ENCODE measurements at regions of chr2 and their contacts with region 1.

Region 1: GRCh38 chr2:110812726-110813645 is 80.6 kb downstream of the ACOXL start:
- DNase-seq: no peak
- ATAC-seq: no peak
- H3K4me3 ChIP-seq: no peak overlapping the region
- H3K4me3 Mint-ChIP-seq: no peak overlapping the region
- H3K27ac ChIP-seq: no peak overlapping the region
- H3K27ac Mint-ChIP-seq: no peak overlapping the region
- H3K4me1 ChIP-seq: no peaks in the 10 kb centered on the region
- H3K4me1 Mint-ChIP-seq: peaks cover 3% of the 10 kb centered on the region
- H3K27me3 ChIP-seq: peaks cover 0 to 14% (median 3%) of the 10 kb centered on the region in 4 experiments
- H3K27me3 Mint-ChIP-seq: peaks cover 27% of the 10 kb centered on the region
- CTCF ChIP-seq: no peak

Region 2: DNA sequence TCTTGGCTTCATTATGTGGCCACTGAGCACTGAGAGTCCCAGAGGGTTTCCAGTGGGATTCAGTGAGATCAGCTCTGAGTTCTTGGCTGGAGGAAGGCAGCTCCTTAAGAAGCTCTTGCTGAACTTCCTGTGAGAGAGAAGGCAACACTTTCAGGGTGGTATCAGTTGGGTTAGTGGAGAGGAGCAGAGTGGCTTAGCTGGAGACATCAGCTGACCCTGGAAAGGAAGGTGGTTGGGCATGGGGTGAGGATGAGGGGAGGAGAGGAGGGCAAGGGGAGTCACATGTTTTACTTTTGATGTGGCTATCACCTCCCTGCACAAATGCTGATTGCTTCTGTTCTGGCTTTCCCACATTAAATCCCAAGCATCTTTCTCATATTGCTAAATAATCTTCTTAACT is 14.5 kb after region 1 on chr2:
- CTCF ChIA-PET with region 1: interaction called, 15 read pairs
- POLR2A ChIA-PET with region 1: no interaction called
- intact Hi-C with region 1: no loop called
- DNase-seq: no peak
- ATAC-seq: no peak
- H3K4me3 ChIP-seq: no peak overlapping the region
- H3K4me3 Mint-ChIP-seq: no peak overlapping the region
- H3K27ac ChIP-seq: no peak overlapping the region
- H3K27ac Mint-ChIP-seq: no peak overlapping the region
- H3K4me1 ChIP-seq: no peaks in the 10 kb centered on the region
- H3K4me1 Mint-ChIP-seq: no peaks in the 10 kb centered on the region
- H3K27me3 ChIP-seq: peaks cover 0 to 6% (median 1%) of the 10 kb centered on the region in 4 experiments
- H3K27me3 Mint-ChIP-seq: peaks cover 32% of the 10 kb centered on the region
- CTCF ChIP-seq: no peak

Region 3: GRCh38 chr2:110853507-110853906 is 40.5 kb after region 1 on chr2:
- CTCF ChIA-PET with region 1: interaction called, 16 read pairs
- POLR2A ChIA-PET with region 1: no interaction called
- intact Hi-C with region 1: no loop called
- DNase-seq: peak; percentile 31
- ATAC-seq: no peak
- H3K4me3 ChIP-seq: no peak overlapping the region
- H3K4me3 Mint-ChIP-seq: no peak overlapping the region
- H3K27ac ChIP-seq: no peak overlapping the region
- H3K27ac Mint-ChIP-seq: no peak overlapping the region
- H3K4me1 ChIP-seq: peaks cover 12 to 26% of the 10 kb centered on the region in 2 donors
- H3K4me1 Mint-ChIP-seq: peaks cover 33% of the 10 kb centered on the region
- H3K27me3 ChIP-seq: no peaks in the 10 kb centered on the region
- H3K27me3 Mint-ChIP-seq: no peaks in the 10 kb centered on the region
- CTCF ChIP-seq: peak; percentile 69

Region 4: DNA sequence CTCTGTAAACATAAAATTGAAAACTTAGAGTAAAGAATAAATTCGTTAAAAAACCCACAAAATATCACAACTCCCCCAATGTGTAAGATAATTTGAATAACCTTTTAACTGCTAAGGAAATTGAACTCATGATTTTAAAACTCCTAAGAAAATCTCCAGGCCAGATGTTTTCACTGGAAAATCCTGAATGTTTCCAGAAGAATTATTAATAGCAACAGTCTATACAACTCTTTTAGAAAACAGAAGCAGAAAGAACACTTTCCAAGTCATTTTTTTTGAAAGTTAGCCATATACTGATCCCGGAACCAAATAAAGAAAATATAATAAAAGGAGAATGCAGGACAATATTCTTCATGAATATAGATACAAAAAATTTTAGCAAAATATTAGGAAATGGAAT is 85.0 kb after region 1 on chr2:
- CTCF ChIA-PET with region 1: no interaction called
- POLR2A ChIA-PET with region 1: no interaction called
- intact Hi-C with region 1: no loop called
- DNase-seq: no peak
- ATAC-seq: no peak
- H3K4me3 ChIP-seq: no peak overlapping the region
- H3K4me3 Mint-ChIP-seq: no peak overlapping the region
- H3K27ac ChIP-seq: no peak overlapping the region
- H3K27ac Mint-ChIP-seq: no peak overlapping the region
- H3K4me1 ChIP-seq: no peaks in the 10 kb centered on the region
- H3K4me1 Mint-ChIP-seq: no peaks in the 10 kb centered on the region
- H3K27me3 ChIP-seq: peaks cover 0 to 10% (median 1%) of the 10 kb centered on the region in 4 experiments
- H3K27me3 Mint-ChIP-seq: peaks cover 20% of the 10 kb centered on the region
- CTCF ChIP-seq: no peak